ENCODE measurements at regions of chr15 and their contacts with region 1.

Region 1: DNA sequence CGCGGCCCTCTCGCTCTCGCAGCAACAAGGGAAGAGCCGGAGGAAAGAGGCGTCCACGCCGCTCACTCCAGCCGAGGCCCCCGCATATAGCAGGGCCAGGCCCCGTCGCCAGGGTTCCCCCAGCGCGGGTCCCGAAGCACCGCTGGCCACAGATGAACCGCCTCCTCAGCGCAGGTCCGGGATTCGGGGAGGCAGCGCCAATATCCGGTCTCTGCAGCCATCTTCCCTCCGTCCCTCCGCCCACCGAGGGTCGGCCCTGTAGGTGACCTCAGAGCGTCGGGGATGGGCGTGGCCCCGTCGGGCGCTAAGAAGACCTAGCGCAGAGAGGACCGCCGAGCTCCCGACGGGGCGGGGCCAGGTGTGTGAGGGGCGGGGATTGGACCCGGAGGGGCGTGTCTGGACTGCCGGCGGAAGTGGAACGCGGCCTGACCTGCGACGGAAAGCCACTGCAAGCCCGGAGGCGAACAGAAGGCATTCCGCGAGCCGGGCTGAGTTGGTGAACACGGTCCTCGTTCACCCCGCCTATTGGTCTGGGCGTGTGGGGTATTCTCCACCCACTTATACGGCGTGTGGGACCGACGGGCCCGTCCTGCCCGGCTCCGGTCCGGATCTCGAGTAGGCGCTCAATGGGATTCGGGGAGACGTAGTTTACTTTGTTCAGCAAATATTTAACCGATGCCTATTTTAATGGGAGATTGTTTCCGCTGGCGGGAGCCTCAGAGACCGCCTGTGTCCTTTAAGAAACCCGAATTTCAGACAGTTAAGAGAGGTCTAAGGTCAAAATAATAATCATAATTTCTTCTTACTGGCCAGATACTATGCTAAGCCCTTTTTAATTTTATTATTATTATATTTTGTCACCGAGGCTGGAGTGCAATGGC is 26.9 kb upstream of the MTHFS start:
- DNase-seq: peak; percentile 98
- H3K4me3 ChIP-seq: peak overlapping the region; percentile 95 to 98
- H3K27ac ChIP-seq: peak overlapping the region; percentile 88 to 96
- H3K4me1 ChIP-seq: no peaks in the 10 kb centered on the region; a peak in 2 of 4 replicates
- H3K27me3 ChIP-seq: no peaks in the 10 kb centered on the region
- CTCF ChIP-seq: no peak
- EP300 ChIP-seq: no peak
- RAD21 ChIP-seq: no peak

Region 2: GRCh38 chr15:79896637-79897379 is 26.9 kb before region 1 on chr15 and contains the start of gene MTHFS:
- CTCF ChIA-PET with region 1: no interaction called
- POLR2A ChIA-PET with region 1: interaction called, 12 read pairs
- DNase-seq: peak; percentile 88
- H3K4me3 ChIP-seq: peak within 1 kb of the TSS; percentile 61 to 65
- H3K27ac ChIP-seq: peak within 1 kb of the TSS; percentile 60 to 91
- H3K4me1 ChIP-seq: peaks cover 0 to 2% of the 10 kb centered on the region in 2 experiments; a peak in 2 of 4 replicates
- H3K27me3 ChIP-seq: no peaks in the 10 kb centered on the region
- CTCF ChIP-seq: peak; percentile 36; the same call in 1 of the 2 replicates
- EP300 ChIP-seq: no peak
- RAD21 ChIP-seq: peak; percentile 30
- polyA plus RNA-seq, gene MTHFS: 21.1 and 21.9 TPM in 2 replicates

Region 3: DNA sequence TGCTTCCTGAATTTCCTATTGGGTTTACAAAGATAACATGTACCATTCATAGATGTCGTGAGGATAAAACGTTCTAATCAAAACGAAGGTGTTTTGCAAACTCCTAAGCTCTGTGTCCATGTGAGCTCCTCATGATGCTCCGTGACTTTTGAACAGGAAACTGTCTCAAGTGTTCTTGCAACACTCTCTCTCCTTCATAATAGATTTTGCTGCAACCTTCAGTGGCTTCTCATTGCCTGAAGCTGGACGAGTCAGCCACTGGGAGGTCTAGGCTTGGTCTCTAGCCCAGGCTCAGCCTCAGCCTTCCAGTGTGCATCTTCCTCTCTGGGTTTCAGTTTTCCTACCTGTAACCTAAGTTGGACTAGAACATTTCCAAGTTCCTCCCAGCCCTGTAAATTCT is 65.9 kb after region 1 on chr15:
- CTCF ChIA-PET with region 1: interaction called, 11 read pairs
- POLR2A ChIA-PET with region 1: no interaction called
- DNase-seq: no peak
- H3K4me3 ChIP-seq: no peak overlapping the region
- H3K27ac ChIP-seq: no peak overlapping the region
- H3K4me1 ChIP-seq: no peaks in the 10 kb centered on the region; a peak in 1 of 4 replicates
- H3K27me3 ChIP-seq: no peaks in the 10 kb centered on the region; the same call in 1 of the 2 replicates
- CTCF ChIP-seq: no peak
- EP300 ChIP-seq: no peak
- RAD21 ChIP-seq: no peak

Region 4: DNA sequence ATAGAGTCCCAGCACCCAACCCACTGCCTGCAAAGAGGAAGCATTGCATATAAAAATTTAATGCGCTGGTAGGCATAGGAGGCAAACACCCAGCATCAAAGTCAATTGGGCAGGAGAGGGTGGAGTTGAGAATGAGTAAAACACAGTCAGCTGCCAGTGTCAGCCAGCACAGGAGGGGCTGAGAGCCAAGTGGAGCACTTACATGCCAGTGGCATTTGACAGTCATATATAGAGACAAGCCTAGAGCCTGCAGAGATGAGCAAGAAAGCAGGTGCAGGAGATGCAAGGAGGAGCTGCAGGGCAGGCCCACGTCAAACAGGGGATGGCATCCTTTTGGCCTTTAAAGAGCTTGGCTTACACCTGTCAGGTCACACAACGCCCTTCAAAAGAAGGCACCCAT is 108.1 kb after region 1 on chr15:
- CTCF ChIA-PET with region 1: no interaction called
- POLR2A ChIA-PET with region 1: no interaction called
- DNase-seq: no peak
- H3K4me3 ChIP-seq: no peak overlapping the region
- H3K27ac ChIP-seq: no peak overlapping the region
- H3K4me1 ChIP-seq: peaks cover 9 to 11% of the 10 kb centered on the region in 2 experiments; a peak in 2 of 4 replicates
- H3K27me3 ChIP-seq: no peaks in the 10 kb centered on the region
- CTCF ChIP-seq: no peak
- EP300 ChIP-seq: no peak
- RAD21 ChIP-seq: no peak

Measured in SK-N-SH (cell line).